ENCODE measurements at regions of chr2 and their contacts with region 1.

Region 1: GRCh38 chr2:17646081-17646554 is 105.6 kb downstream of the VSNL1 start:
- DNase-seq: peak in 9 of 14 experiments; percentile 6 to 66 (median 24)
- ATAC-seq: peak; percentile 52
- H3K4me3 ChIP-seq: no peak overlapping the region
- H3K4me3 Mint-ChIP-seq: no peak overlapping the region
- H3K27ac ChIP-seq: no peak overlapping the region
- H3K27ac Mint-ChIP-seq: no peak overlapping the region
- H3K4me1 ChIP-seq: no peaks in the 10 kb centered on the region
- H3K4me1 Mint-ChIP-seq: no peaks in the 10 kb centered on the region
- H3K27me3 ChIP-seq: no peaks in the 10 kb centered on the region
- H3K27me3 Mint-ChIP-seq: no peaks in the 10 kb centered on the region
- CTCF ChIP-seq: peak; percentile 78

Region 2: DNA sequence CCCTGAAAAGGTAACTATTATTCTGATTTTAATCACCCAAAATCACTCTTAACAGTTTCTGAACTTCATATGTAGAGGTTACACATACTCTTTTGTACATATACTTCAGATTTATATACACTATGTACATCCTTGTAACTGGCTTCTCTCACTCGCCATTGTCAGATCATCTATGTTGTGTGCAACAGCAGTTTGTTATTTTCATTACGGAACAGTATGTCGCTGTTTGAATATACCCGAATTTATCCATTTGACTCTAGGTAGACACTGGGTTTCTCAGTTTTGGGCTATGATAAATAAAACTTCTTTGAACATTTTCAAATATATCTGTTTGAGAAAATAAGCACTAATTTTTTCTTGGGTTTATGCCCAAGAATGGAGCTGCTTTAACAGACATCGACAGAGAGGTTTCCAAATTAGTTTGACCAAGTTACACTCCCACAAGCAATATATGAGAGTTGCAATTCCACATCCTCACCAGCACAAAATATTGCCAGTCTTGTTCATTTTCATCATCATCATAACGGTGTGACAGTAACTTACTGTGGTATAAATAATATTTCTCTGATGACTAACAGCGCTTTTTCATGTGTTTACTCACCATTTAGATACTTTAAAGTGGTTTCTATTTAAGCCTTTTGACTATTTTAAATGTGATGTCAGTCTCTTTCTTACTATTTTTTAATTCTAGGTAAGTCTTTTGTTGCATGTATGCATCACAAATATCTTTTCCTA is 26.6 kb after region 1 on chr2:
- CTCF ChIA-PET with region 1: interaction called, 13 read pairs
- POLR2A ChIA-PET with region 1: interaction called, 3 read pairs
- intact Hi-C with region 1: loop called (anchors 1 kb)
- DNase-seq: no peak
- ATAC-seq: no peak
- H3K4me3 ChIP-seq: no peak overlapping the region
- H3K4me3 Mint-ChIP-seq: no peak overlapping the region
- H3K27ac ChIP-seq: no peak overlapping the region
- H3K27ac Mint-ChIP-seq: no peak overlapping the region
- H3K4me1 ChIP-seq: no peaks in the 10 kb centered on the region
- H3K4me1 Mint-ChIP-seq: no peaks in the 10 kb centered on the region
- H3K27me3 ChIP-seq: no peaks in the 10 kb centered on the region
- H3K27me3 Mint-ChIP-seq: no peaks in the 10 kb centered on the region
- CTCF ChIP-seq: no peak

Region 3: GRCh38 chr2:17869128-17869527 is 223.0 kb after region 1 on chr2:
- CTCF ChIA-PET with region 1: no interaction called
- POLR2A ChIA-PET with region 1: no interaction called
- intact Hi-C with region 1: no loop called
- DNase-seq: no peak
- ATAC-seq: no peak
- H3K4me3 ChIP-seq: no peak overlapping the region
- H3K4me3 Mint-ChIP-seq: no peak overlapping the region
- H3K27ac ChIP-seq: no peak overlapping the region
- H3K27ac Mint-ChIP-seq: no peak overlapping the region
- H3K4me1 ChIP-seq: no peaks in the 10 kb centered on the region
- H3K4me1 Mint-ChIP-seq: no peaks in the 10 kb centered on the region
- H3K27me3 ChIP-seq: peaks cover 0 to 3% of the 10 kb centered on the region in 2 experiments
- H3K27me3 Mint-ChIP-seq: peaks cover 48% of the 10 kb centered on the region
- CTCF ChIP-seq: no peak

Region 4: GRCh38 chr2:18178736-18179349 is 532.7 kb after region 1 on chr2:
- CTCF ChIA-PET with region 1: interaction called, 3 read pairs
- POLR2A ChIA-PET with region 1: no interaction called
- intact Hi-C with region 1: loop called in 1 of 2 experiments (anchors 10 kb)
- DNase-seq: peak in 7 of 14 experiments; percentile 1 to 50 (median 23)
- ATAC-seq: no peak
- H3K4me3 ChIP-seq: no peak overlapping the region
- H3K4me3 Mint-ChIP-seq: no peak overlapping the region
- H3K27ac ChIP-seq: no peak overlapping the region
- H3K27ac Mint-ChIP-seq: no peak overlapping the region
- H3K4me1 ChIP-seq: no peaks in the 10 kb centered on the region
- H3K4me1 Mint-ChIP-seq: no peaks in the 10 kb centered on the region
- H3K27me3 ChIP-seq: no peaks in the 10 kb centered on the region
- H3K27me3 Mint-ChIP-seq: peaks cover 13% of the 10 kb centered on the region
- CTCF ChIP-seq: peak; percentile 72

Region 5: DNA sequence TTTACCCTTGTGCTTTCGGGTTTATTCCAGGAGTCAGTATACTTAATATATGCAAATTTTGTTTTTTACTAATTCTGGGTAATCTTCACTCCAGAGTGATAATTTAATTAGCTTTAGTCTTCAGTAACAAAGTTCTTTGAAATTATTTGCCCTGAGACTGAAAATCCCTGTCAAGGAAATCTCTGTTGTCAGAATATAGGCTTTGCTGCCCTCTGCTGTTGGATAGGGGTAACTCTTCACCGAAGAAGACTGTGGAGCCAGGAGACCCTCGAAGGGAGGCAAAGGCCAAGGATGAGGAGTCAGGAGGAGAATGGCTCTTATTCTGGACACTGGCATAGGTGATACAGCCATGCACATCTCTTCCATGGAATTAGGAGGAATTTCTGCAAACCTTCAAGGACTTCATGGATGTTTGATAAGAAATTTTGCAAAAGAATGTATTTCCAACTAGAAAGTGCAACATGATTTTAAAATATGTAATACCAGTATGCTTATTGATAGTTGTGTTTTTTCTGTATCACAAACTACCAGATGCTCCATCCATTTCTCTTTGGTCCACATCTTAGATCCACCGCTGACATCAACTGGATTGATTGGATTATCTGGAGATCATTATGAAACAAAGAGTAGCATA is 732.0 kb after region 1 on chr2:
- CTCF ChIA-PET with region 1: no interaction called
- POLR2A ChIA-PET with region 1: no interaction called
- intact Hi-C with region 1: loop called in 1 of 2 experiments (anchors 5 kb)
- DNase-seq: peak in 6 of 14 experiments; percentile 3 to 34 (median 22)
- ATAC-seq: no peak
- H3K4me3 ChIP-seq: no peak overlapping the region
- H3K4me3 Mint-ChIP-seq: no peak overlapping the region
- H3K27ac ChIP-seq: no peak overlapping the region
- H3K27ac Mint-ChIP-seq: no peak overlapping the region
- H3K4me1 ChIP-seq: peaks cover 2% of the 10 kb centered on the region
- H3K4me1 Mint-ChIP-seq: no peaks in the 10 kb centered on the region
- H3K27me3 ChIP-seq: peaks cover 0 to 11% of the 10 kb centered on the region in 2 experiments
- H3K27me3 Mint-ChIP-seq: peaks cover 21% of the 10 kb centered on the region
- CTCF ChIP-seq: peak; percentile 72